Activated CD4-positive, alpha-beta memory T cell treated with anti-CD3 and anti-CD28 coated beads, Interleukin-2, amount 10 ng/mL, durations not matched to agents 7 days and 5 days (primary cell): ENCODE measurements at regions of chr17 and their contacts with region 1.

Region 1: DNA sequence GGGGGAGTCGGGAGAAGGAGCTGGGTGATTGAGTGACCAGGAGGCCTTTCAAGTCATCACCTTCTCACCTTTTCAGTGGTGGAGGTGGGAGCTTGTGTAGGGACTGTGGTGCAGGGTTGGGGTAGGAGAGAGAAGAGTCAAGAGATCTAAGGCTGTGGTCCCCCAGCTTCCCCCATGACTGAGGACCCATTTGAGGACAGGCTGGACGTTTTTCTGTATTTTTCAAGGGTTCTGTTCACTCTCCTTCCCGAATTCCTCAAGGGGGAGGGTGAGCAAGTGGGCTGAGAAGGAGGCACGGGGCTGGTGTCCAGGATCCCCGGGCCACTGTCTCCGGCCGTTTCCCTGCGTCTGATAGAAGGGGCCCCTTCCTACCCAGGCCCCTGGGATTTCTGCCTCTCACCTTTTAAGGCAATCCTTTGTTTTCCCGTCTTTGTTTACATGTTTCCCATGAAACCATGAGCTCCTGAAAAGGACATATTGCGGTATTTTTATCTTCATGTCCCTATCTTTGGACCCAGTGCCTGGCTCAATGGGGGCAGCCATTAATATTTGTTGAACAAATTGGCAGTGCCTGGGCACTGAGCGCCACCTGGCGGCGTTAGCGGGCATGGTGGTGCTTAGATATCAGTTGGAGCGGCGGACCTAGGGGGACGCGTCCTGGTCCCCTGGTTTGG is 9.2 kb upstream of the CD300A start:
- DNase-seq: peak; percentile 79
- H3K4me3 Mint-ChIP-seq: no peak overlapping the region
- H3K27ac Mint-ChIP-seq: peak overlapping the region; percentile 34
- H3K4me1 Mint-ChIP-seq: peaks cover 50% of the 10 kb centered on the region
- H3K27me3 Mint-ChIP-seq: peaks cover 21% of the 10 kb centered on the region

Region 2: GRCh38 chr17:74424657-74425056 is 32.6 kb before region 1 on chr17:
- CTCF ChIA-PET with region 1: no interaction called
- POLR2A ChIA-PET with region 1: no interaction called
- DNase-seq: no peak
- H3K4me3 Mint-ChIP-seq: no peak overlapping the region
- H3K27ac Mint-ChIP-seq: no peak overlapping the region
- H3K4me1 Mint-ChIP-seq: no peaks in the 10 kb centered on the region
- H3K27me3 Mint-ChIP-seq: peaks cover 22% of the 10 kb centered on the region

Region 3: GRCh38 chr17:74437702-74438101 is 19.6 kb before region 1 on chr17:
- CTCF ChIA-PET with region 1: interaction called, 11 read pairs
- POLR2A ChIA-PET with region 1: no interaction called
- DNase-seq: no peak
- H3K4me3 Mint-ChIP-seq: no peak overlapping the region
- H3K27ac Mint-ChIP-seq: no peak overlapping the region
- H3K4me1 Mint-ChIP-seq: peaks cover 2% of the 10 kb centered on the region
- H3K27me3 Mint-ChIP-seq: peaks cover 38% of the 10 kb centered on the region

Region 4: GRCh38 chr17:74493381-74493833 is 36.1 kb after region 1 on chr17:
- CTCF ChIA-PET with region 1: interaction called, 19 read pairs
- POLR2A ChIA-PET with region 1: no interaction called
- DNase-seq: peak; percentile 75
- H3K4me3 Mint-ChIP-seq: no peak overlapping the region
- H3K27ac Mint-ChIP-seq: no peak overlapping the region
- H3K4me1 Mint-ChIP-seq: peaks cover 22% of the 10 kb centered on the region
- H3K27me3 Mint-ChIP-seq: peaks cover 15% of the 10 kb centered on the region

Region 5: GRCh38 chr17:74619077-74619673 is 161.9 kb after region 1 on chr17:
- CTCF ChIA-PET with region 1: no interaction called
- POLR2A ChIA-PET with region 1: no interaction called
- DNase-seq: no peak
- H3K4me3 Mint-ChIP-seq: no peak overlapping the region
- H3K27ac Mint-ChIP-seq: no peak overlapping the region
- H3K4me1 Mint-ChIP-seq: no peaks in the 10 kb centered on the region
- H3K27me3 Mint-ChIP-seq: peaks cover 68% of the 10 kb centered on the region